AG04449 (cell line): ENCODE measurements at regions of chr4 and their contacts with region 1.

Region 1: GRCh38 chr4:85084380-85085094 is 118.0 kb upstream of the WDFY3 start:
- DNase-seq: peak; percentile 29
- H3K4me3 ChIP-seq: no peak overlapping the region
- CTCF ChIP-seq: peak; percentile 61

Region 2: DNA sequence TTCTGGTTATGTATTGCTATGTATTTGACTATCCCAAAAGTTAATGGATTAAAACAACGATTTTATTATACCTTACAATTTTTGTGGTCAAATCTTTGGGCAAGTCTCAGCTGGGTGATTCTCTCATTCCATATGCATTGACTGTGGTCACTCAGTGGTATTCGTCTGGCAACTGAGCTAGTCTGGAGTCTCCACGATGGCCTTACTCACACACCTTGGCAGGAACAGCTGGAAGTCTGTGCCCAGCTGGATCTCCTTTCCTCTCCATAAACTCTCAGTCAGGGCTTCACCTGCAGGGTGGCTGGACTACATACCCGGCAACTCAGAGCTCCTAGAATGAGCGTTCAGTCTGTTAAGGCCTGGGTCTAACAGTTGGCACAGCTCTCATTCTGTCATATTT is 23.0 kb after region 1 on chr4:
- CTCF ChIA-PET with region 1: interaction called, 12 read pairs
- POLR2A ChIA-PET with region 1: no interaction called
- DNase-seq: no peak
- H3K4me3 ChIP-seq: no peak overlapping the region
- CTCF ChIP-seq: no peak

Region 3: GRCh38 chr4:85113706-85114105 is 29.2 kb after region 1 on chr4:
- CTCF ChIA-PET with region 1: interaction called, 11 read pairs
- POLR2A ChIA-PET with region 1: no interaction called
- DNase-seq: peak; percentile 34
- H3K4me3 ChIP-seq: no peak overlapping the region
- CTCF ChIP-seq: no peak

Region 4: GRCh38 chr4:85147439-85148076 is 63.0 kb after region 1 on chr4:
- CTCF ChIA-PET with region 1: interaction called, 13 read pairs
- POLR2A ChIA-PET with region 1: no interaction called
- DNase-seq: peak; percentile 10
- H3K4me3 ChIP-seq: no peak overlapping the region
- CTCF ChIP-seq: peak; percentile 42

Region 5: GRCh38 chr4:85370430-85371032 is 286.0 kb after region 1 on chr4:
- CTCF ChIA-PET with region 1: interaction called, 22 read pairs
- POLR2A ChIA-PET with region 1: interaction called, 4 read pairs
- DNase-seq: no peak
- H3K4me3 ChIP-seq: no peak overlapping the region
- CTCF ChIP-seq: peak; percentile 77

Region 6: GRCh38 chr4:85603437-85604336 is 519.1 kb after region 1 on chr4:
- CTCF ChIA-PET with region 1: no interaction called
- POLR2A ChIA-PET with region 1: no interaction called
- DNase-seq: no peak
- H3K4me3 ChIP-seq: no peak overlapping the region
- CTCF ChIP-seq: no peak

Region 7: GRCh38 chr4:85968945-85969819 is 884.6 kb after region 1 on chr4:
- CTCF ChIA-PET with region 1: interaction called, 17 read pairs
- POLR2A ChIA-PET with region 1: no interaction called
- DNase-seq: no peak
- H3K4me3 ChIP-seq: no peak overlapping the region
- CTCF ChIP-seq: peak; percentile 30